Activated CD4-positive, alpha-beta memory T cell treated with anti-CD3 and anti-CD28 coated beads for 36 hours (primary cell): ENCODE measurements at regions of chr2 and their contacts with region 1.

Region 1: GRCh38 chr2:224570328-224570993 is 14.7 kb downstream of the CUL3 start:
- DNase-seq: no peak
- H3K4me3 Mint-ChIP-seq: peak overlapping the region; percentile 10
- H3K27ac Mint-ChIP-seq: peak overlapping the region; percentile 40
- H3K4me1 Mint-ChIP-seq: peaks cover 85% of the 10 kb centered on the region
- H3K27me3 Mint-ChIP-seq: no peaks in the 10 kb centered on the region

Region 2: DNA sequence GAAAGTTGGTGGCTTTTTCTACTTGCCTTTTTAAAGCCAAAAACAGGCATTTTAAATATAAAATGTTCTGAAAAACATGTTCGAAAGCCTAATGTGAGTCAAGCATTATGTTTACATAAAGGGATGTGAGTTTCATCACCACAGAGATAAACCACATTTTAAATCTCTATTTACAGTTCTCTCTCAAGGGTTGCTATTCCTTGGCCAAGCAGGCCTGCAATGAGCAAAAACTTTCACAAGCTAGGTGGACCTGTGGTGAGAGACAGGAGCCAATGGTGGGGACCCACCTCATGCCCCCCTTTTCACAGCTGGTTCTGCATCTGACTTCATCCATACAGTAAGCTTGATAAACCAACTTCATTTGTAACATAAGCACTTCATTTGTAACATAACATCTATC is 50.4 kb before region 1 on chr2:
- CTCF ChIA-PET with region 1: no interaction called
- POLR2A ChIA-PET with region 1: interaction called, 4 read pairs
- intact Hi-C with region 1: loop called (anchors 2 kb)
- DNase-seq: peak; percentile 71
- H3K4me3 Mint-ChIP-seq: no peak overlapping the region
- H3K27ac Mint-ChIP-seq: peak overlapping the region; percentile 9
- H3K4me1 Mint-ChIP-seq: peaks cover 53% of the 10 kb centered on the region
- H3K27me3 Mint-ChIP-seq: no peaks in the 10 kb centered on the region

Region 3: DNA sequence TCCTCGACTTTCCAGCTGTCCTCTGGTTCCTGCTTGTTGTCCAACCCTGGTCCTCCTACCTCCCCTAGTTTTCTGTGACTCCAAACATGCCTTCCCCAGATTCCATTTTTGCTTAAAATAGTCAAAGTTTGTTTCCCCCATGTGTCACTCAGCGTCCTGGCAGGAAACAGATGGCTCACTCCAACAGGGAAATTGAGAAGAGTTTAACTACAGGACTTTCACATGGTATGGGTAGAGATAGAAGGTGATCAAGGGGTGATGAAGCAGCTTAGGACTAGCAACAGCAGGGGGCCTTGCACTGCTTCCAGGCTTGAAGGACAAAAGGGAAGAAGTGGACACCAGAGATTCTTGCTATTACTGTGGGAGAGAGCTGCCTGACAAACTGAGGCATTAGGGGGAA is 20.8 kb after region 1 on chr2:
- CTCF ChIA-PET with region 1: no interaction called
- POLR2A ChIA-PET with region 1: no interaction called
- intact Hi-C with region 1: no loop called
- DNase-seq: no peak
- H3K4me3 Mint-ChIP-seq: no peak overlapping the region
- H3K27ac Mint-ChIP-seq: no peak overlapping the region
- H3K4me1 Mint-ChIP-seq: peaks cover 3% of the 10 kb centered on the region
- H3K27me3 Mint-ChIP-seq: peaks cover 1% of the 10 kb centered on the region